Naive thymus-derived CD4-positive, alpha-beta T cell (primary cell): ENCODE measurements at regions of chr11 and their contacts with region 1.

Region 1: DNA sequence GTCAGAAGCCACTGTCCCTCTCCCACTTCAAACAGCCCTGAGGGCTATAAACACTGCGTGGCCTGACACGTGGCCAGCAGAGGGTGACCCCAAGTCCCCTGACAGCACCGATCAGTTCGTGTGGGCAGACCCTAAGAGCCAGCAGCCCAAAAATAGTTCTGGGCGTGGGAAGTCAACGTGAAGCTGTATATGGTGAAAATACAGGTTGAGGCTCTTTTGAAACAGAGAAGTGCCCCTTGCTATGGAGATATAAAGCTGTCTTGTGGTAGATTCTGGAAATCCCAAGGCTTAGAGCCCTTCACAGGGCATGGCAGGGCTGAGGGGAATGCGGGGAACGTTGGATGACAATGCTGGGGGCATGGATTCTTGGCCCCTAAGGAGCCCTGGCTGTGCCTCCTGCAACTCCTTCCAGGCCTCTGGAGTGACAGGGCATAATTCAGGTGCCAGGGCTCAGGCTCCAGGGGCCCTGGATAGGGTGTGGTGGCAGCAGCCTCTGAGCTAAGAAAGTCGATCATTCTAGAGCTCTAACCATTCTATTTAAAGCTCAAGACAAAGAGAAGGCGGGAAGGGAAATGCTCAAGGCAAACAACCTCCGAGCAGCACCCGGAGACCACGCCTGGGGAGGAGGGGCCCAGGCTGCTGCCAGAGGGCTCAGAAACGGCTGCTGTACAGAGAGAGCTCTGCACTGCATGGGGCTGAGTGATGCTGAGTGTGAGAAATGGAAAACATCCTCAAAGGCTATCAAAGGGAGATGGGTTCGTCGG is 60.4 kb upstream of the CD5 start:
- DNase-seq: peak; percentile 60 to 97 (median 96)
- ATAC-seq: peak; percentile 98
- H3K4me3 ChIP-seq: peak overlapping the region; percentile 20
- H3K4me3 Mint-ChIP-seq: peak overlapping the region; percentile 70 to 85 (median 76)
- H3K27ac ChIP-seq: peak overlapping the region; percentile 81
- H3K27ac Mint-ChIP-seq: peak overlapping the region; percentile 96 to 100 (median 98)
- H3K4me1 ChIP-seq: peaks cover 22 to 49% of the 10 kb centered on the region in 2 donors
- H3K4me1 Mint-ChIP-seq: peaks cover 40 to 70% (median 59%) of the 10 kb centered on the region in 7 donors
- H3K27me3 ChIP-seq: no peaks in the 10 kb centered on the region
- H3K27me3 Mint-ChIP-seq: no peaks in the 10 kb centered on the region

Region 2: GRCh38 chr11:61004180-61004611 is 37.7 kb before region 1 on chr11:
- CTCF ChIA-PET with region 1: interaction called, 4 read pairs
- POLR2A ChIA-PET with region 1: interaction called, 12 read pairs
- intact Hi-C with region 1: loop called in 1 of 2 experiments (anchors 1 kb)
- DNase-seq: peak in 5 of 9 donors; percentile 53 to 64 (median 54)
- ATAC-seq: peak; percentile 59
- H3K4me3 ChIP-seq: peak overlapping the region; percentile 14
- H3K4me3 Mint-ChIP-seq: peak overlapping the region; percentile 79 to 87 (median 82)
- H3K27ac ChIP-seq: peak overlapping the region; percentile 65
- H3K27ac Mint-ChIP-seq: peak overlapping the region; percentile 84 to 97 (median 95)
- H3K4me1 ChIP-seq: peaks cover 16 to 70% of the 10 kb centered on the region in 2 donors
- H3K4me1 Mint-ChIP-seq: peaks cover 59 to 90% (median 77%) of the 10 kb centered on the region in 7 donors
- H3K27me3 ChIP-seq: no peaks in the 10 kb centered on the region
- H3K27me3 Mint-ChIP-seq: no peaks in the 10 kb centered on the region

Region 3: DNA sequence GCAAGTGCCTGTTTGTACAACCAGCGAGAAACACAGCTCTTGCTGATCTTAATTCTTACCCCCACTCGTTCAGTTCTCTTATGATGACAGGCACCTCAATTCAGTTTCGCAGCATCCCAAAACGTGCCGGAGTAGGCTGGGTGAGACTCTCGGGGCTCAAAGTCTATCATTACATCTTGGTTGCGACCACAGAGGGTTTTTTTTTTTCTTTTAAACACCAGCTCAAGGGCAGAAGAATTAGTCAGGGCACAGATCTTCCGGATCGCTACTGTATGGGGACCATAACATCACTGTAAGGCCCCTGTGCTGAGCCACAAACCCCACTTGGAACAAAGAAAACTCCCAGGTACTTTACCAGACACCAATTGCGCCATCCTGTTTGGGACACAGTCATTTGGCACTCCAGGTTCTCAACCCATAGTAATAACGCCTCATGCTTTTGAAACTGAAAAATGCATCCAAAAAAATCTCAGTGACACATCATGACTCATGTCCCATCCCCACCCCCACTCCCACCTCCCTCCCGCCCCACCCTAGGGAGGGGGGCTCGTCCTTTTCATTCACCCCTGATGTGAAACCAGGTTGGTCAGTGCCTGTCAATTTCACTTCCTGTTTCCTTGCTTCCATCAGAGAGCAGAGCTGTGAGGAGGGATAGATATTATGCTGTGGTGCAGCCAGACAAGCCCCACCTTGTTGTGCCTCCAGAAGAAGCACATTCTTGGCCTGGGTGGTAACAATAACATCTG is 19.3 kb after region 1 on chr11:
- CTCF ChIA-PET with region 1: interaction called, 9 read pairs
- POLR2A ChIA-PET with region 1: interaction called, 222 read pairs
- intact Hi-C with region 1: loop called (anchors 1 kb)
- DNase-seq: peak in 7 of 9 donors; percentile 47 to 89 (median 56)
- ATAC-seq: peak; percentile 86
- H3K4me3 ChIP-seq: peak overlapping the region; percentile 34
- H3K4me3 Mint-ChIP-seq: peak overlapping the region; percentile 75 to 94 (median 83)
- H3K27ac ChIP-seq: peak overlapping the region; percentile 72
- H3K27ac Mint-ChIP-seq: peak overlapping the region; percentile 88 to 99 (median 96)
- H3K4me1 ChIP-seq: peaks cover 24 to 48% of the 10 kb centered on the region in 2 donors
- H3K4me1 Mint-ChIP-seq: peaks cover 47 to 83% (median 80%) of the 10 kb centered on the region in 7 donors
- H3K27me3 ChIP-seq: no peaks in the 10 kb centered on the region
- H3K27me3 Mint-ChIP-seq: no peaks in the 10 kb centered on the region

Region 4: DNA sequence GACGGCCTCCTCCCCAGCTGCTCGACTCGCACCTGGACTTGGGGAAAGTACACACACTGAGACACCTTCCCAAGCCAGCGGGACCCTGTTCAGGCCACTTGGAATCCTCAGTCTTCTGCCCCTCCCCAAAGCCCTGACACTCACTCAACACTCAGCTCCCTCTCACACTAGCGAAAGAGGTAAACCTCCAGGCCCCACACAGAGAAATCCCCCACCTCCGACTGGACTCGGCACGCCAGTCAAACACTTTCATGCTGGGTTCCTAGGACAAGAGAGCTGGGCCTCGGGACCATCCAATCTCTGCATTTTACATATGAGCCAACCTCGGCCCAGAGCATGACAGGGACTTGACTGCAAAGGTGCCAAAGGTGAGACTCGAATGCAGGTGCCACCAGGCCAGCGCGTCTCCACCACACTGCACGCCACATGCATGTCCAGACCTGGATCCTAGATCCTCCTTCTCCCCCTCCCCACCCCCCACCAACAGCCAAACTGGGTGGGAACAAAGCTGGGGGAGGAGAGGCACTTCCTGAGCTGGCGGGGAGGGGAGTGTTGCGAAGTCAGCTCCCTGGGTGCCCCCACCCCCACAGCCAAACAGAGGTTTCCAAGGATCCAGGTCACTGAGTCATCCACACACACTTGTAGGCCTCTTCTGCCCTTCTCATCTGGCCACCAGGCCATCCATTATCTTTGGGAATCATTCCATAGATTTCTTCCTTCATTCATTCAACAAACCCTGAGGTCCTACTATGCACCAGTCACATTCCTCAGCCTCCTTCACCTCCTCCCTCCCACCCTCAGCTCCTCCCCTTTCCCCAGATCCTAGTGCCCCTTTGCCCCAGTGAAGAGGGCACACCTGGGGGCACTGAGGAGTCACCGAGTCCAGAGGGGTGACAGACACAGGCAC is 49.7 kb after region 1 on chr11:
- CTCF ChIA-PET with region 1: interaction called, 3 read pairs
- POLR2A ChIA-PET with region 1: interaction called, 6 read pairs
- intact Hi-C with region 1: loop called in 1 of 2 experiments (anchors 1 kb)
- DNase-seq: peak in 1 of 9 donors; percentile 74
- ATAC-seq: peak; percentile 34
- H3K4me3 ChIP-seq: peak overlapping the region; percentile 27
- H3K4me3 Mint-ChIP-seq: peak overlapping the region; percentile 41 to 90 (median 74)
- H3K27ac ChIP-seq: peak overlapping the region; percentile 79
- H3K27ac Mint-ChIP-seq: peak overlapping the region; percentile 86 to 98 (median 91)
- H3K4me1 ChIP-seq: peaks cover 10 to 27% of the 10 kb centered on the region in 2 donors
- H3K4me1 Mint-ChIP-seq: peaks cover 28 to 72% (median 49%) of the 10 kb centered on the region in 7 donors
- H3K27me3 ChIP-seq: no peaks in the 10 kb centered on the region
- H3K27me3 Mint-ChIP-seq: no peaks in the 10 kb centered on the region

Region 5: DNA sequence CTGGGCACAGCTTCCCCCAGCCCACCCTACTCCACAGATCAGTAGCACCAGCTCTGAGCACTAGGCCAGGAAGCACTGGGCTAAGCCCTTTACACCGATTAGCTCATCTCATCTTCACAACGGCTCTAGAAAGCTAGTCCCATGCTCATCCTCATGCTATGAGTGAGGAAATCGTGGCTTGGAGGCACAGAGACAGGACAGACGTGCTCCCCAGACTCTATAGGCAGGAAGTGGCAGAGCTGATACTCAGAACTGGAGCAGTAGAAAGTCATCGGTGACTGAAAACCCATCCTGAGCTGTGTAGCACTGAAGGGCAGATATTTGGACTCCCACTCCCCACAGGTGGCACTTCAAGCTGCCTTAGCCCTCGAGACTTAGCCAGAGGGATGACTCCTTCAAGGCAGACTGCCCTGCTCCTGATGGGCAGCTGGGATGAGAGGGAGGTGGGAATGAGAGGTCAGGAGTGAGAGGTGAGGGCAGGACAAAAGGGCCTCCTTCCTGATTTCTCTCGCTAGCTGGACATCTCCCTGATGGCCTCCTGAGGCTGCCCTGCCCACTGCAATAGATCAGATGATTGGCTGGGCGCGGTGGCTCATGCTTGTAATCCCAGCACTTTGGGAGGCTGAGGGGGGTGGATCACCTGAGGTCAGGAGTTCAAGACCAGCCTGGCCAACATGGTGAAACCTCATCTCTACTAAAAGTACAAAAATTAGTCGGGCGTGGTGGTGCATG is 70.0 kb after region 1 on chr11:
- CTCF ChIA-PET with region 1: interaction called, 4 read pairs
- POLR2A ChIA-PET with region 1: interaction called, 33 read pairs
- intact Hi-C with region 1: loop called in 1 of 2 experiments (anchors 1 kb)
- DNase-seq: peak in 8 of 9 donors; percentile 57 to 78 (median 74)
- ATAC-seq: peak; percentile 81
- H3K4me3 ChIP-seq: peak overlapping the region; percentile 31
- H3K4me3 Mint-ChIP-seq: peak overlapping the region in 9 of 10 donors; percentile 82 to 93 (median 86)
- H3K27ac ChIP-seq: peak overlapping the region; percentile 78
- H3K27ac Mint-ChIP-seq: peak overlapping the region in 7 of 9 donors; percentile 81 to 98 (median 92)
- H3K4me1 ChIP-seq: peaks cover 58 to 93% of the 10 kb centered on the region in 2 donors
- H3K4me1 Mint-ChIP-seq: peaks cover 81 to 100% (median 97%) of the 10 kb centered on the region in 7 donors
- H3K27me3 ChIP-seq: no peaks in the 10 kb centered on the region
- H3K27me3 Mint-ChIP-seq: no peaks in the 10 kb centered on the region

Region 6: DNA sequence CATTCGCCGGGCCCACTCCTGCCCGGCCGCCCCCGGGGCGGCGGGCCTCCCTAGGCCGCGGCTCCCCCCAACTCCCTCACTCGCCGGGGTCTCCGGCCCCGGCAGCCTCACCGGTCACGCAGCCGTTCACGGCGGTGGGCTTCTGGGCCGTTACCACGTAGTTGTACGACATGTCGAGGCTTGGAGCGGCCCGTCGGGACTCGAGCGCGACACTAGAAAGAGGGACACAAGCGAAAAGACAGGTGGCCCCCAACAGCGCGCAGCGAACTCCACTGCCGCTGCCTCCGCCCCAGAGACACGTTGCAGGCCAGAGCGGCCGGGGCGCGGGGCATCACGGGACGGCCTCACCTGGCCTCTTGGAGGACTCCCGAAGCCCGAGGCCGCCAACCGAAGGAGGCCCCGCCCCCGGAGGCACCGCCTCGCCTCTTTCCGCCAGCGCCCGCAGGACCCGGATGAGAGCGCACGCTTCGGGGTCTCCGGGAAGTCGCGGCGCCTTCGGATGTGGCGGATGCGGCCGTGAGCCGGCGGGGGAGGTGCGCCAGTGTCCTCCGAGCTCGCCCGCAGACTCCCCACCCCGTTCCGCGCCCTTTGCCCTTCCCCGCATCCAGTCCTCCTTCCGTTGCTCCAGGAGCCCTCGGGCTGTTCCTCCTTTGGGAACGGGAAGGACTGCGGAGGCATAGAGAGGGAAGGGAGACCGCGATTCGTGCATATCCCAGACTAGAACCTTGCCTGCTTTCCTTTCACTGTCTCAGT is 291.0 kb after region 1 on chr11 and contains the starts of genes DDB1 and TKFC:
- CTCF ChIA-PET with region 1: no interaction called
- POLR2A ChIA-PET with region 1: no interaction called
- intact Hi-C with region 1: no loop called
- DNase-seq: peak; percentile 91 to 99 (median 97)
- ATAC-seq: peak; percentile 96
- H3K4me3 ChIP-seq: peak within 1 kb of the TSS; percentile 84
- H3K4me3 Mint-ChIP-seq: peak within 1 kb of the TSS; percentile 83 to 100 (median 95)
- H3K27ac ChIP-seq: peak within 1 kb of the TSS; percentile 99
- H3K27ac Mint-ChIP-seq: peak within 1 kb of the TSS; percentile 91 to 100 (median 98)
- H3K4me1 ChIP-seq: peaks cover 27 to 30% of the 10 kb centered on the region in 2 donors
- H3K4me1 Mint-ChIP-seq: peaks cover 33 to 67% (median 64%) of the 10 kb centered on the region in 7 donors
- H3K27me3 ChIP-seq: no peaks in the 10 kb centered on the region
- H3K27me3 Mint-ChIP-seq: no peaks in the 10 kb centered on the region
- total RNA-seq, gene DDB1: 153 to 213 (median 160) TPM
- total RNA-seq, gene TKFC: 36.9 to 59.9 (median 43.3) TPM